Uterus (tissue), 4 donors: ENCODE measurements at regions of chr20 and their contacts with region 1.

Region 1: GRCh38 chr20:57514273-57514751 is 10.6 kb downstream of the CTCFL start:
- DNase-seq: peak; percentile 71 to 78
- H3K4me3 ChIP-seq: no peak overlapping the region
- H3K27ac ChIP-seq: no peak overlapping the region
- H3K4me1 ChIP-seq: no peaks in the 10 kb centered on the region
- H3K27me3 ChIP-seq: no peaks in the 10 kb centered on the region
- CTCF ChIP-seq: peak; percentile 79 to 92 (median 88)
- POLR2A ChIP-seq: no peak

Region 2: GRCh38 chr20:58209652-58210397 is 695.5 kb after region 1 on chr20:
- intact Hi-C with region 1: loop called (anchors 10 kb)
- DNase-seq: peak; percentile 77 to 85
- H3K4me3 ChIP-seq: no peak overlapping the region
- H3K27ac ChIP-seq: no peak overlapping the region
- H3K4me1 ChIP-seq: no peaks in the 10 kb centered on the region
- H3K27me3 ChIP-seq: no peaks in the 10 kb centered on the region
- CTCF ChIP-seq: peak; percentile 100
- POLR2A ChIP-seq: no peak